Adrenal gland (tissue), 19 donors: ENCODE measurements at regions of chr7 and their contacts with region 1.

Region 1: DNA sequence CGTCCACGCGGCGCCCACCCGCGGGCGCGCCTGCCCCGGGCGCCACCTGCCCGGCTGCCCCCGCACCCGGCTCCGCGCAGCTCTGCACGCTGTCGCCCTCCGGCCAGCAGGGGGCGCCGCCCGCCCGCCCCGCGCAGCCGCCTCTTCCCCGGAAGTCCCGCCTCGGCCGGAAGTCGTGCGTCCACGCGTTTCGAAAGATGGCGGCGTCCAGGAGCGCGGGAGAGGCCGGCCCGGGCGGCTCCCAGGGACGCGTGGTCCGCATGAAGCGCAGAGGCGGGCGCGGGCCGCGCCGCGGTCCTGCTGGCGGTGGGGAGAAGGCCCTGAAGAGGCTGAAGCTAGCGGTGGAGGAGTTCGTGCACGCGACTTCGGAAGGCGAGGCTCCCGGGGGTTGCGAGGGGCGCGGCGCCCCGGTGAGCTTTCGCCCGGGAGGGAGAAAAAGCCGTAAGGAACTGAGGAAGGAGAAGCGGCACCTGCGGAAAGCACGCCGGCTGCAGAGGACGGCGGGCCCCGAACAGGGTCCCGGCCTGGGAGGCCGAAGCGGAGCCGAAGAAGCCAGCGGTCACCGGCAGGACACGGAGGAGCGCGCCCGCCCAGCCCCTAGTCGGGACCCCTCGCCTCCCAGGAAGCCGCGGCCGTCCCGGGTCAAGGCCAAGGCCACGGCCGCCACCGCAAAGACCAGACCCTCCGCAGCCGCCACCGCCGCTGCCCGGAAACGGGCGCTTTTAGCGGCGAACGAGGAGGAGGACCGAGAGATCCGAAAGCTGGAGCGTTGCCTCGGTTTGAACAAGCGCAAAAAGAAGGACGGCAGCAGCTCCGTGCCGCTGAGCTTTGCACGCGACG is at the start of gene NOM1:
- DNase-seq: peak; percentile 81 to 92 (median 90)
- H3K4me3 ChIP-seq: peak within 1 kb of the TSS; percentile 59 to 94 (median 90)
- H3K27ac ChIP-seq: peak within 1 kb of the TSS in 4 of 5 donors; percentile 2 to 71 (median 53)
- H3K4me1 ChIP-seq: peaks cover 11 to 18% of the 10 kb centered on the region in 2 donors
- H3K27me3 ChIP-seq: no peaks in the 10 kb centered on the region
- CTCF ChIP-seq: peak in 4 of 6 experiments; percentile 16 to 95 (median 88)
- POLR2A ChIP-seq: peak in 1 of 2 donors; percentile 46
- total RNA-seq, gene NOM1: 5.6 to 19.8 (median 16.1) TPM

Region 2: DNA sequence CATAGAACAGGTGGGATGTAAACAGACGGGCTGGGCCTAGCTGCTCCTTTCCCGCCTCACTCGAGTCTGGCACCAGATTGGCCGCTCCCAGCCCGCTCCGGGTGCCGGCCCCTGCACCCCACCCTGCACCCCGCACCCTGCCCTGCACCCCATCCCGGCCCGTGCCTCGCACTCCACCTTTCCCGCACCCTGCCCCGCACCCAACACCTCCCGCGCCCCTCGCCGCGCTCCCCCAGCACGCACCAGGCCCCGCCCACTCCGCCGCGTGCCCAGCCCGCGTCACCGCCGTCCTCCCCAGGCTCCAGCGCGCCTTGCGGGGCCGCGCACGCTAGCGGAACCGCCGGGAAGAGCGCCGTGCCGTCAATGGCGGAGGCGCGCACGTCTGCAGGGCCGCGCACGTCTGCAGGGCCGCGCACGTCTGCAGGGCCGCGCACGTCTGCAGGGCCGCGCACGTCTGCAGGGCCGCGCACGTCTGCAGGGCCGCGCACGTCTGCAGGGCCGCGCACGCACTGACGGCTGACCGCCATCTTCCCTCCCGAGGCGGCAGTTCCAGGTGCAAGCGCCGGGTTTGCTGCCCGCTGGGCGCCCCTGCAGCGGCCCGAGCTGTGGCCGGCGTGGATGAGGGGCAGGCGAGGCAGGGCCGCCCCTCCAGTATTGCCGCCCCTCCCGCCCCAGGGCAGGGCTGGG is 188.8 kb after region 1 on chr7 and contains the start of gene UBE3C:
- intact Hi-C with region 1: loop called in 1 of 2 experiments (anchors 10 kb)
- DNase-seq: peak; percentile 82 to 91 (median 88)
- H3K4me3 ChIP-seq: peak within 1 kb of the TSS in 3 of 4 donors; percentile 7 to 84 (median 33)
- H3K27ac ChIP-seq: peak within 1 kb of the TSS in 4 of 5 donors; percentile 77 to 98 (median 86)
- H3K4me1 ChIP-seq: peaks cover 13 to 28% of the 10 kb centered on the region in 2 donors
- H3K27me3 ChIP-seq: no peaks in the 10 kb centered on the region
- CTCF ChIP-seq: peak in 1 of 6 experiments; percentile 30
- POLR2A ChIP-seq: peak; percentile 33 to 46
- total RNA-seq, gene UBE3C: 31.5 to 58.1 (median 46.5) TPM